ENCODE measurements at regions of chr10 and their contacts with region 1.

Region 1: GRCh38 chr10:73060738-73061635 is 35.7 kb downstream of the P4HA1 start:
- DNase-seq: peak in 1 of 35 experiments; percentile 52
- ATAC-seq: peak in 2 of 4 experiments; percentile 26 to 54
- H3K4me3 ChIP-seq: no peak overlapping the region
- H3K4me3 Mint-ChIP-seq: no peak overlapping the region
- H3K27ac ChIP-seq: no peak overlapping the region
- H3K27ac Mint-ChIP-seq: peak overlapping the region in 1 of 2 donors; percentile 77
- H3K4me1 ChIP-seq: peaks cover 0 to 2% of the 10 kb centered on the region in 2 experiments
- H3K4me1 Mint-ChIP-seq: peaks cover 6 to 10% (median 8%) of the 10 kb centered on the region in 3 donors
- H3K27me3 ChIP-seq: no peaks in the 10 kb centered on the region
- H3K27me3 Mint-ChIP-seq: no peaks in the 10 kb centered on the region

Region 2: GRCh38 chr10:72061491-72061890 is 999.5 kb before region 1 on chr10:
- CTCF ChIA-PET with region 1: no interaction called
- POLR2A ChIA-PET with region 1: no interaction called
- DNase-seq: peak in 1 of 35 experiments; percentile 37
- ATAC-seq: peak; percentile 8 to 32 (median 20)
- H3K4me3 ChIP-seq: no peak overlapping the region
- H3K4me3 Mint-ChIP-seq: no peak overlapping the region
- H3K27ac ChIP-seq: no peak overlapping the region
- H3K27ac Mint-ChIP-seq: peak overlapping the region; percentile 53 to 73
- H3K4me1 ChIP-seq: peaks cover 0 to 18% of the 10 kb centered on the region in 2 experiments
- H3K4me1 Mint-ChIP-seq: peaks cover 36 to 50% (median 48%) of the 10 kb centered on the region in 3 donors
- H3K27me3 ChIP-seq: no peaks in the 10 kb centered on the region
- H3K27me3 Mint-ChIP-seq: no peaks in the 10 kb centered on the region

Region 3: GRCh38 chr10:73044378-73045285 is 16.4 kb before region 1 on chr10:
- CTCF ChIA-PET with region 1: interaction called in 1 of 2 experiments, 3 read pairs
- POLR2A ChIA-PET with region 1: interaction called in 1 of 2 experiments, 12 read pairs
- DNase-seq: no peak
- ATAC-seq: no peak
- H3K4me3 ChIP-seq: no peak overlapping the region
- H3K4me3 Mint-ChIP-seq: no peak overlapping the region
- H3K27ac ChIP-seq: no peak overlapping the region
- H3K27ac Mint-ChIP-seq: no peak overlapping the region
- H3K4me1 ChIP-seq: no peaks in the 10 kb centered on the region
- H3K4me1 Mint-ChIP-seq: no peaks in the 10 kb centered on the region
- H3K27me3 ChIP-seq: no peaks in the 10 kb centered on the region
- H3K27me3 Mint-ChIP-seq: no peaks in the 10 kb centered on the region